Activated CD4-positive, alpha-beta memory T cell treated with anti-CD3 and anti-CD28 coated beads for 36 hours (primary cell): ENCODE measurements at regions of chr12 and their contacts with region 1.

Region 1: DNA sequence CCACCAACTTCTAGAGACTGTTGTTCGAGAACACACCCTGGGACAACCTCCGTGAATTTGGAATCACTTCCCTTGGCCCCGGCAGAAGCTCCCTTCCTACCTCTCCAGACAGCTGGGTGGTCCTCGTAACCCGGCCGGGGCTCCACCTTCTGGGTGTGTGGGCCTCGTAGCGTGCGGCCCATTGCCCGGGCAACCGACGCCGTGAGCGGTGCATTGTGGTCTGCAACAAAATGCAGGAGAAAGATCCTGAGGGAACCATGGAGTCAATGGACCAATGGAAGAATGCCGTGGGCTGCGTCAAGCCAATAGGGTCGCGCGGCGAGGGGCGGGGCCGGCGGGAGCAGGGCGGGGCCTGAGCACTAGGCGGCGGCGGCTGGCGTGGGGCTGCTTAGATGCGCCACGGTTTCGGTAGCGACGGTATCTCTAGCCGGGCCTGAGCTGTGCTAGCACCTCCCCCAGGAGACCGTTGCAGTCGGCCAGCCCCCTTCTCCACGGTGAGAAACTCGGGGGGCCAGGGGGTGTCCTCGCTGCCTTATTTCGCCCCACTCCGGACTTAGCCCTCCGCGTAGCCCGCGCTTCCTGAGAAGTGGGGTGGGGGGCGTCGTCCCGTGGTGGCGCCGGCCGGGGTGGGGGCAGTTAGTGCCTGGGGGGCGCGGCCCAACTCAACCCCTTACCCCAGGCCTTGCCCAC is at the start of gene DYNLL1:
- DNase-seq: peak; percentile 98
- H3K4me3 Mint-ChIP-seq: peak within 1 kb of the TSS; percentile 86
- H3K27ac Mint-ChIP-seq: peak within 1 kb of the TSS; percentile 80
- H3K4me1 Mint-ChIP-seq: peaks cover 23% of the 10 kb centered on the region
- H3K27me3 Mint-ChIP-seq: no peaks in the 10 kb centered on the region
- total RNA-seq, gene DYNLL1: 176 to 184 TPM

Region 2: GRCh38 chr12:120249875-120250795 is 245.7 kb before region 1 on chr12:
- CTCF ChIA-PET with region 1: no interaction called
- POLR2A ChIA-PET with region 1: no interaction called
- intact Hi-C with region 1: loop called (anchors 1 kb)
- DNase-seq: peak; percentile 64
- H3K4me3 Mint-ChIP-seq: peak overlapping the region; percentile 39
- H3K27ac Mint-ChIP-seq: peak overlapping the region; percentile 81
- H3K4me1 Mint-ChIP-seq: peaks cover 78% of the 10 kb centered on the region
- H3K27me3 Mint-ChIP-seq: no peaks in the 10 kb centered on the region

Region 3: GRCh38 chr12:120445911-120446843 is 49.7 kb before region 1 on chr12 and contains the starts of genes GATC and TRIAP1:
- CTCF ChIA-PET with region 1: no interaction called
- POLR2A ChIA-PET with region 1: no interaction called
- intact Hi-C with region 1: loop called (anchors 2 kb)
- DNase-seq: peak; percentile 94
- H3K4me3 Mint-ChIP-seq: peak within 1 kb of the TSS; percentile 93
- H3K27ac Mint-ChIP-seq: peak within 1 kb of the TSS; percentile 94
- H3K4me1 Mint-ChIP-seq: peaks cover 35% of the 10 kb centered on the region
- H3K27me3 Mint-ChIP-seq: peaks cover 1% of the 10 kb centered on the region
- total RNA-seq, gene GATC: 35.1 to 37.1 TPM
- total RNA-seq, gene TRIAP1: 32.2 to 34.6 TPM

Region 4: GRCh38 chr12:120534203-120534702 is 38.4 kb after region 1 on chr12 and contains the start of gene RNF10:
- CTCF ChIA-PET with region 1: interaction called, 6 read pairs
- POLR2A ChIA-PET with region 1: interaction called, 3 read pairs
- intact Hi-C with region 1: loop called (anchors 2 kb)
- DNase-seq: peak; percentile 80
- H3K4me3 Mint-ChIP-seq: peak within 1 kb of the TSS; percentile 97
- H3K27ac Mint-ChIP-seq: peak within 1 kb of the TSS; percentile 96
- H3K4me1 Mint-ChIP-seq: peaks cover 43% of the 10 kb centered on the region
- H3K27me3 Mint-ChIP-seq: no peaks in the 10 kb centered on the region
- total RNA-seq, gene RNF10: 188 to 210 TPM